Naive thymus-derived CD4-positive, alpha-beta T cell (primary cell): ENCODE measurements at regions of chr7 and their contacts with region 1.

Region 1: GRCh38 chr7:129037585-129037984 is 17.3 kb downstream of the TNPO3 start:
- DNase-seq: no peak
- ATAC-seq: no peak
- H3K4me3 ChIP-seq: no peak overlapping the region
- H3K4me3 Mint-ChIP-seq: no peak overlapping the region
- H3K27ac ChIP-seq: no peak overlapping the region
- H3K27ac Mint-ChIP-seq: peak overlapping the region in 3 of 9 donors; percentile 15 to 38 (median 35)
- H3K4me1 ChIP-seq: peaks cover 0 to 6% of the 10 kb centered on the region in 2 donors
- H3K4me1 Mint-ChIP-seq: peaks cover 18 to 63% (median 57%) of the 10 kb centered on the region in 7 donors
- H3K27me3 ChIP-seq: no peaks in the 10 kb centered on the region
- H3K27me3 Mint-ChIP-seq: no peaks in the 10 kb centered on the region

Region 2: DNA sequence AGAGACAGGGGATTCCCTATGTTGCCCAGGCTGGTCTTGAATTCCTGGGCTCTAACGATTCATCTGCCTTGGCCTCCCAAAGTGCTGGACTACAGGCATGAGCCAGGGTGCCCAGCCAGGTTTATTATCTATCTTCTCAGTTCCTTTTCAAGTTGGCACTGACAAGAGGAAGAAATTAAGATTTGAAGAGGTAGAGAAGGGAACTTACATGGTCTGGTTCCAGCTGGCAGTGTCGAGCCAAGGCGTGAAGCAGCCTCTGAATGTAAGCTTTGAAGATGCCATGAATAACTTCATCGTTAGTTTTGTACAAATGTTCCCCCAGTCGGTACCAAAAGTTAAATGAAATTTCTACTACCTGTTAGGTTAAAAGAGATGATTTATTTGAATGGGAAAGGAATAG is 40.4 kb before region 1 on chr7:
- CTCF ChIA-PET with region 1: interaction called, 10 read pairs
- POLR2A ChIA-PET with region 1: no interaction called
- intact Hi-C with region 1: no loop called
- DNase-seq: no peak
- ATAC-seq: no peak
- H3K4me3 ChIP-seq: no peak overlapping the region
- H3K4me3 Mint-ChIP-seq: no peak overlapping the region
- H3K27ac ChIP-seq: no peak overlapping the region
- H3K27ac Mint-ChIP-seq: no peak overlapping the region
- H3K4me1 ChIP-seq: no peaks in the 10 kb centered on the region
- H3K4me1 Mint-ChIP-seq: no peaks in the 10 kb centered on the region
- H3K27me3 ChIP-seq: no peaks in the 10 kb centered on the region
- H3K27me3 Mint-ChIP-seq: no peaks in the 10 kb centered on the region

Region 3: GRCh38 chr7:129054438-129055293 is 17.1 kb after region 1 on chr7 and contains the start of gene TNPO3:
- CTCF ChIA-PET with region 1: no interaction called
- POLR2A ChIA-PET with region 1: interaction called, 7 read pairs
- intact Hi-C with region 1: loop called in 1 of 2 experiments (anchors 2 kb)
- DNase-seq: peak; percentile 76 to 90 (median 85)
- ATAC-seq: peak; percentile 92
- H3K4me3 ChIP-seq: peak within 1 kb of the TSS; percentile 96
- H3K4me3 Mint-ChIP-seq: peak within 1 kb of the TSS; percentile 91 to 99 (median 99)
- H3K27ac ChIP-seq: peak within 1 kb of the TSS; percentile 92
- H3K27ac Mint-ChIP-seq: peak within 1 kb of the TSS; percentile 96 to 100 (median 99)
- H3K4me1 ChIP-seq: peaks cover 15 to 18% of the 10 kb centered on the region in 2 donors
- H3K4me1 Mint-ChIP-seq: peaks cover 17 to 51% (median 39%) of the 10 kb centered on the region in 7 donors
- H3K27me3 ChIP-seq: peaks cover 0 to 3% of the 10 kb centered on the region in 2 donors
- H3K27me3 Mint-ChIP-seq: peaks cover 4 to 13% (median 4%) of the 10 kb centered on the region in 5 donors
- total RNA-seq, gene TNPO3: 28.6 to 40.6 (median 39.6) TPM